CD4-positive, alpha-beta T cell (primary cell): ENCODE measurements at regions of chr7 and their contacts with region 1.

Region 1: GRCh38 chr7:27739909-27740448 is at the start of gene TAX1BP1:
- DNase-seq: peak; percentile 89 to 98 (median 94)
- ATAC-seq: peak; percentile 91
- H3K4me3 ChIP-seq: peak within 1 kb of the TSS; percentile 88
- H3K4me3 Mint-ChIP-seq: peak within 1 kb of the TSS; percentile 99
- H3K27ac ChIP-seq: peak within 1 kb of the TSS; percentile 98 to 99
- H3K27ac Mint-ChIP-seq: peak within 1 kb of the TSS; percentile 98
- H3K4me1 ChIP-seq: peaks cover 13% of the 10 kb centered on the region
- H3K4me1 Mint-ChIP-seq: peaks cover 53% of the 10 kb centered on the region
- H3K27me3 ChIP-seq: no peaks in the 10 kb centered on the region
- H3K27me3 Mint-ChIP-seq: no peaks in the 10 kb centered on the region
- CTCF ChIP-seq: no peak
- total RNA-seq, gene TAX1BP1: 115 TPM

Region 2: GRCh38 chr7:28179120-28180030 is 439.4 kb after region 1 on chr7:
- CTCF ChIA-PET with region 1: no interaction called
- POLR2A ChIA-PET with region 1: no interaction called
- intact Hi-C with region 1: loop called in 1 of 2 experiments (anchors 10 kb)
- DNase-seq: peak; percentile 52 to 89 (median 74)
- ATAC-seq: peak; percentile 65
- H3K4me3 ChIP-seq: peak overlapping the region; percentile 52
- H3K4me3 Mint-ChIP-seq: peak overlapping the region; percentile 83
- H3K27ac ChIP-seq: no peak overlapping the region
- H3K27ac Mint-ChIP-seq: peak overlapping the region; percentile 81
- H3K4me1 ChIP-seq: peaks cover 15% of the 10 kb centered on the region
- H3K4me1 Mint-ChIP-seq: peaks cover 22% of the 10 kb centered on the region
- H3K27me3 ChIP-seq: no peaks in the 10 kb centered on the region
- H3K27me3 Mint-ChIP-seq: no peaks in the 10 kb centered on the region
- CTCF ChIP-seq: no peak